ENCODE measurements at regions of chr2 and their contacts with region 1.

Region 1: DNA sequence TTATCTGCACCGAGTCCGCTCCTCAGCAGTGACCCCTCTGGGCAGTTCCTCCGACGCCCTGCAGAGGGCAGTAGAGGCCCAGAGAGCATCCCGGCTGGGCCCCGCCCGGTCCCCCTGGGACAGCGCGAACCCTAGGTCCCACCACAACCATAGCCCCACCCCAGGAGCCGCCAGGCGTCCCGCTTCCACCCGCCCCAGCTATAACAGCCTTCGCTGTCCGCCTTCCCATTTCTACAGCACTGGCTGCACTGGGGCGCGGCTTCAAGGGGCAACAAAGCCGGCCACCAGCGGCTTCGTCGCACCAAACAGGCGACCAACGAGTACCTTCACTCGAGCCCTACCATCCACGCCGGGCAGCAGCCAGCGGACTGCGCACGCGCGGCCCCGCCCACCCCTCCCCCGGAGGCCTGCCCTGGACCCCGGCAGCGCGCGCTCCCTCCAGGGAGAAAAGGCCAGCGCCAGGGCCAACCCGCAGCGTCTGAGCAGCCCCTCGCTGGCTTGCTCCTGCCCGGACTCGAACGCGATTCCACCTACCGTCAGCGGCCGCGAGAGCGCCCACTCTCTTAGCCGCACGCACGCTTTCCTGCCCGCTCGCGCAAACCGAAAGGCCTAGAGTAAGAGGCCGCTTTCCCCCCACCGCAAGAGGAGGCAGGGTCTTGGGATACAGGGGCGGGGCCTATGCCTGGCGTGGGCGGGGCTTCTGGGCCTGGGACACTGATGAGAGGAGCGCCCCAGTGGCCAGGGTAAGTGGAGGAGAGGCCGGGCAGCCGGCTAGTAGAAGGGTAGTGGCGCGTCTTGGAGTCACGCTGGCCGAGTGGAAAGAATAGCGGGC is at the start of gene NHEJ1:
- DNase-seq: peak; percentile 96
- H3K4me3 Mint-ChIP-seq: peak within 1 kb of the TSS; percentile 87
- H3K27ac Mint-ChIP-seq: peak within 1 kb of the TSS; percentile 92
- H3K4me1 Mint-ChIP-seq: peaks cover 14% of the 10 kb centered on the region
- H3K27me3 Mint-ChIP-seq: no peaks in the 10 kb centered on the region
- total RNA-seq, gene NHEJ1: 17.7 to 18.6 TPM

Region 2: GRCh38 chr2:217573571-217573970 is 1586.8 kb before region 1 on chr2:
- CTCF ChIA-PET with region 1: no interaction called
- POLR2A ChIA-PET with region 1: no interaction called
- intact Hi-C with region 1: no loop called
- DNase-seq: no peak
- H3K4me3 Mint-ChIP-seq: no peak overlapping the region
- H3K27ac Mint-ChIP-seq: no peak overlapping the region
- H3K4me1 Mint-ChIP-seq: no peaks in the 10 kb centered on the region
- H3K27me3 Mint-ChIP-seq: no peaks in the 10 kb centered on the region

Region 3: DNA sequence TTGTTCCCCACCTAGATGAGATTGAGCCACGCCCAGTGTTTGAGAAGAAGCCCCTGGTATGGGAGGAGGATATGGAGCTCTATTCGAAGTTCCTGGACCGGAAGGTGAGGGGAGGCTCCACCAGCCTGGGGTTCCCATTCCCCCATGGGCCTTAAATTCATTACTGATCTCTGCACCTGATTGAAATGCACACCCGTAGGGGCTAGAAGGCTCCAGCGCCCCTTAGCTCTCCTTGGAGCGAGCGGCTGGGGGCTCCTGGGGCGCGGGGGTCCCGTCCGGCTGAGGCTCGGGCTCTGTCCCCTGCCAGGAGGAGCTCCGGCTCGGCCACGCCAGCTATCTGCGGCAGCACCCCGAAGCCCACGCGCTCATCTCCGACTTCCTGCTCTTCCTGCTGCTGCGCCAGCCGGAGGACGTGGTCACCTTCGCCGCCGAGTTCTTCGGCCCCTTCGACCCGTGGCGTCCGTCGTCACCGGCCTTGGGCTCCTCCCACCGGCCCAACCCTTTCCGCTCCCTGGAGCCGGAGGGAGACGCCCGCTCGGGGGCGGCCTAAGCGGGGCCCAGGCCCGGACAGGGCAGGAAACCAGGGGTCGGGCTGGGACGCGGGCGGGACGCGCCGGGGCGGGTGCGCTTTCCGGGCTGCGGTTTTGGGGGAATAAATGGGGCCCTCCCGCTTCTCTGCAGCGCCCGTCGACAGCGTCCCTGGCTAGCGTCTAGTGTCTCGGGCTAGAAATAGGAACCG is 792.8 kb before region 1 on chr2:
- CTCF ChIA-PET with region 1: no interaction called
- POLR2A ChIA-PET with region 1: no interaction called
- intact Hi-C with region 1: no loop called
- DNase-seq: peak; percentile 86
- H3K4me3 Mint-ChIP-seq: peak overlapping the region; percentile 78
- H3K27ac Mint-ChIP-seq: peak overlapping the region; percentile 71
- H3K4me1 Mint-ChIP-seq: peaks cover 8% of the 10 kb centered on the region
- H3K27me3 Mint-ChIP-seq: no peaks in the 10 kb centered on the region

Region 4: DNA sequence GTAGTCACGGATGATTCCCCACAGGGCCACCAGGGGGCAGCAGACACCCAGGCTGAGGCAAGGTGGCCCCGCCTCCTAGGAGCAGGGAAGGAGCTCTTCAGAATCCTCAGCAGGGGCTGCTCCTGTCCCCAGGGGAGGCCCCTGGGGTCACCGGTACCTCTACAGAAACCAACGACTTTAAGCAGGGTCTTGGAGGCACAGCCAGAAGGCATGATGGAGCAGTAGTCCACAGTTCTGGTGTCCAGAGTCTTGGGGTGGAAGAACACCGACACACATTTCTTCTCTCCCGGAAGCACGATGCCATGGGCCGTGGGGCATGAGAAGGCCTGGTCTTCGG is 130.6 kb before region 1 on chr2:
- CTCF ChIA-PET with region 1: interaction called, 48 read pairs
- POLR2A ChIA-PET with region 1: no interaction called
- intact Hi-C with region 1: loop called (anchors 1 kb)
- DNase-seq: peak; percentile 85
- H3K4me3 Mint-ChIP-seq: no peak overlapping the region
- H3K27ac Mint-ChIP-seq: no peak overlapping the region
- H3K4me1 Mint-ChIP-seq: no peaks in the 10 kb centered on the region
- H3K27me3 Mint-ChIP-seq: peaks cover 20% of the 10 kb centered on the region

Region 5: GRCh38 chr2:219104107-219105035 is 56.0 kb before region 1 on chr2:
- CTCF ChIA-PET with region 1: interaction called, 12 read pairs
- POLR2A ChIA-PET with region 1: no interaction called
- intact Hi-C with region 1: no loop called
- DNase-seq: peak; percentile 18
- H3K4me3 Mint-ChIP-seq: no peak overlapping the region
- H3K27ac Mint-ChIP-seq: peak overlapping the region; percentile 53
- H3K4me1 Mint-ChIP-seq: peaks cover 29% of the 10 kb centered on the region
- H3K27me3 Mint-ChIP-seq: no peaks in the 10 kb centered on the region

Region 6: GRCh38 chr2:219171231-219171651 is 10.8 kb after region 1 on chr2:
- CTCF ChIA-PET with region 1: interaction called, 42 read pairs
- POLR2A ChIA-PET with region 1: interaction called, 8 read pairs
- intact Hi-C with region 1: no loop called
- DNase-seq: peak; percentile 27
- H3K4me3 Mint-ChIP-seq: no peak overlapping the region
- H3K27ac Mint-ChIP-seq: peak overlapping the region; percentile 54
- H3K4me1 Mint-ChIP-seq: peaks cover 35% of the 10 kb centered on the region
- H3K27me3 Mint-ChIP-seq: no peaks in the 10 kb centered on the region

Region 7: DNA sequence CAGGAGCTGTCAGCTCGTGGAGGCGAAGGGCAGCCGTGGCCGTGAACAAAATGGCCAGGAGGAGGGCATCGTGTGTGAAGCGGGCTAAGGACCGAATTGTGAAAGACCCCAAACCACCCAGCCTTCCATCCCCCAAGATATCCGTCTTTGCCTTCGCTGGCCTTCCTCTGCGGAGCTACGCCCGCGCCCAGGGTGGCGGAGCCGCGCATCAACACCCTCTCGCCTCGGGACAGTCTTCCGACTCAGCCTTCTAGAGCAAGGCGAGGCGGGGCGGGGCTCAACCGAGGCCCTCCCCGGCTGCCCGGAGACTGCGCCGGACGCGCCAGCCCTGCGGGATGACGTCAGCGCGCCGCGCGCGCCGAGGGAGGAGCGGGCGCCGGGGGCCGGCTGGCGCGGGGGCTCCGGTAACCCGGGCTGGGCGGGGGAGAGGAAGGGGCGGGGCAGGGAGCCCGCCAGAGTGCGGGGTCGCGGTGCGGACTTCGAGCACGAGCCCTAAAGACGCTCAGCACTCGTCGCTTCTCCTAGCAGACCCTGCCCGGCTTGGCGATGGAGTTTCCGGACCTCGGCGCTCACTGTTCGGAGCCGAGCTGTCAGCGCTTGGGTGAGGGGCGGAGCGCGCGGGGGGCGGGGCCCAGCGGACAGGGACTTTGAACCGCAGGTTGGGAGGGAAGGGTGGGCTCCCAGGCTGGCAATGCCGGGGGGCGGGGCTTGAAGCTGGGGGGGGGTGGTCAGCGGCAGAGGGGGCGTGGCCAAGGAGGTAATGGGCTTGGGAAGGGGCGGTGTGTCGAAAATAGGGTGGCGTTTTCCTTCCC is 46.2 kb after region 1 on chr2 and contains the start of gene ZFAND2B:
- CTCF ChIA-PET with region 1: interaction called, 27 read pairs
- POLR2A ChIA-PET with region 1: interaction called, 4 read pairs
- intact Hi-C with region 1: loop called (anchors 1 kb)
- DNase-seq: peak; percentile 95
- H3K4me3 Mint-ChIP-seq: peak within 1 kb of the TSS; percentile 94
- H3K27ac Mint-ChIP-seq: peak within 1 kb of the TSS; percentile 99
- H3K4me1 Mint-ChIP-seq: peaks cover 32% of the 10 kb centered on the region
- H3K27me3 Mint-ChIP-seq: no peaks in the 10 kb centered on the region
- total RNA-seq, gene ZFAND2B: 31.9 to 34.4 TPM

Region 8: GRCh38 chr2:219253753-219254590 is 93.6 kb after region 1 on chr2 and contains the start of gene TUBA4A:
- CTCF ChIA-PET with region 1: interaction called, 10 read pairs
- POLR2A ChIA-PET with region 1: interaction called, 6 read pairs
- intact Hi-C with region 1: loop called (anchors 1 kb)
- DNase-seq: peak; percentile 92
- H3K4me3 Mint-ChIP-seq: peak within 1 kb of the TSS; percentile 86
- H3K27ac Mint-ChIP-seq: peak within 1 kb of the TSS; percentile 97
- H3K4me1 Mint-ChIP-seq: peaks cover 49% of the 10 kb centered on the region
- H3K27me3 Mint-ChIP-seq: no peaks in the 10 kb centered on the region
- total RNA-seq, gene TUBA4A: 219 to 229 TPM

Region 9: GRCh38 chr2:219352448-219353023 is 192.1 kb after region 1 on chr2:
- CTCF ChIA-PET with region 1: interaction called, 3 read pairs
- POLR2A ChIA-PET with region 1: no interaction called
- intact Hi-C with region 1: loop called (anchors 1 kb)
- DNase-seq: peak; percentile 81
- H3K4me3 Mint-ChIP-seq: no peak overlapping the region
- H3K27ac Mint-ChIP-seq: no peak overlapping the region
- H3K4me1 Mint-ChIP-seq: no peaks in the 10 kb centered on the region
- H3K27me3 Mint-ChIP-seq: peaks cover 28% of the 10 kb centered on the region